ENCODE measurements at regions of chr11 and their contacts with region 1.

Region 1: GRCh38 chr11:64185816-64186498 is at the start of gene STIP1:
- DNase-seq: peak; percentile 98 to 99
- ATAC-seq: peak; percentile 83 to 88 (median 86)
- H3K4me3 ChIP-seq: peak within 1 kb of the TSS; percentile 73
- H3K27ac ChIP-seq: no peak within 1 kb of the TSS
- H3K4me1 ChIP-seq: peaks cover 52% of the 10 kb centered on the region
- H3K27me3 ChIP-seq: no peaks in the 10 kb centered on the region
- CTCF ChIP-seq: peak; percentile 31
- total RNA-seq, gene STIP1: 124 to 194 (median 162) TPM

Region 2: GRCh38 chr11:64165849-64166635 is 19.9 kb before region 1 on chr11 and contains the start of gene MACROD1:
- intact Hi-C with region 1: loop called in 1 of 2 experiments (anchors 2 kb)
- DNase-seq: peak; percentile 93 to 96
- ATAC-seq: peak; percentile 81 to 83 (median 82)
- H3K4me3 ChIP-seq: peak within 1 kb of the TSS; percentile 87
- H3K27ac ChIP-seq: peak within 1 kb of the TSS; percentile 98
- H3K4me1 ChIP-seq: peaks cover 14% of the 10 kb centered on the region
- H3K27me3 ChIP-seq: no peaks in the 10 kb centered on the region
- CTCF ChIP-seq: no peak
- total RNA-seq, gene MACROD1: 151 to 206 (median 182) TPM

Region 3: GRCh38 chr11:64225612-64226506 is 39.9 kb after region 1 on chr11 and contains the starts of genes NUDT22 and TRPT1:
- intact Hi-C with region 1: loop called in 1 of 2 experiments (anchors 5 kb)
- DNase-seq: peak; percentile 92 to 96
- ATAC-seq: peak; percentile 81 to 88 (median 82)
- H3K4me3 ChIP-seq: peak within 1 kb of the TSS; percentile 74
- H3K27ac ChIP-seq: peak within 1 kb of the TSS; percentile 91
- H3K4me1 ChIP-seq: peaks cover 50% of the 10 kb centered on the region
- H3K27me3 ChIP-seq: no peaks in the 10 kb centered on the region
- CTCF ChIP-seq: peak; percentile 25
- total RNA-seq, gene NUDT22: 39.6 to 59.3 (median 49.6) TPM
- total RNA-seq, gene TRPT1: 49.6 to 131 (median 92.5) TPM